ENCODE measurements at regions of chr10 and their contacts with region 1.

Region 1: DNA sequence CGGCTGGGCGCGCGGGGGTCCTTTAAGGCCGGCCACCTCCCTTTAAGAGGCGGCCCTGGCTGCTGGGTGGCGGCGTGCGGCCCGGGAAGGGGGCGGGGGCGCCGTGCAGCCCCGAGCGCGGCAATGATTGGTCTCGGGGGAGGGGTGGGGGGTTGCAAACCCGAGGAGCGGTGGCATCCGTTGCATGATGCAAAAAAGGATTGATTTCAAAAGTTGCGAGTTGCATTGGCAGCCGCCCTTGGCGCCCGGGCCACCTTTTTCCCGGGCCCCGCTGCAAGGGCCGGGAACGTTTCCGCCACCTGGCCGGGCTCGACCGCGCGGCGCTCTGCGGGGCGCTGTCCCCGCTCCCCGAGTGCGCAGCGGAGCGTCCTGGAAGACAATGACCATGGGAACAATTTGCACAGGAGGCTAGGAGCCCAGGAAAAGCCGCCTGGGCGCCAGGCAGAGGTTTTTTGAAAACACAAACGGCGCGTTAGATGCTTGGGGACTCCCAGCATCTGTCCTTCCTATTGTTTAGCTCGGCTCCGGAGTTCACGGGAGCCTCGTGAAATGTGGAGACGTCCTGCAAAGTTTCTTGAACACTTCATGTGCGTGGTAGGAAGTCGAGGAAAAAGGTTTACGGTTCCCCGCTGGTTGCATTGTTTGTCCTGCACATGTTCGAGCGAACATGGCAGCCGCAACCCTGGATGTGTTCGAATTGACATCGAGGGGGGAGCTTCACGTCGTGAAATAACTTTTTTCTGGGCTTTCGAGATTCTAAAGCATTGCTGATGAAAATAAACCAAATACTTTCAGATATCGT is at the start of gene SEPHS1:
- DNase-seq: peak in 1 of 2 donors; percentile 85
- H3K4me3 ChIP-seq: peak within 1 kb of the TSS; percentile 90 to 93
- H3K27ac ChIP-seq: peak within 1 kb of the TSS; percentile 93 to 96
- H3K4me1 ChIP-seq: peaks cover 0 to 13% of the 10 kb centered on the region in 2 donors
- H3K27me3 ChIP-seq: no peaks in the 10 kb centered on the region
- CTCF ChIP-seq: peak in 2 of 3 experiments; percentile 5 to 10
- total RNA-seq, gene SEPHS1: 20.3 TPM

Region 2: GRCh38 chr10:13160934-13161856 is 187.2 kb before region 1 on chr10 and contains the start of gene MCM10:
- intact Hi-C with region 1: loop called (anchors 1 kb)
- DNase-seq: peak; percentile 92 to 99
- H3K4me3 ChIP-seq: peak within 1 kb of the TSS; percentile 29 to 68
- H3K27ac ChIP-seq: no peak within 1 kb of the TSS
- H3K4me1 ChIP-seq: peaks cover 4 to 10% of the 10 kb centered on the region in 2 donors
- H3K27me3 ChIP-seq: no peaks in the 10 kb centered on the region
- CTCF ChIP-seq: peak; percentile 73 to 90 (median 85)
- total RNA-seq, gene MCM10: 0.11 TPM

Region 3: GRCh38 chr10:13371897-13372470 is 23.6 kb after region 1 on chr10:
- intact Hi-C with region 1: no loop called
- DNase-seq: peak in 1 of 2 donors; percentile 76
- H3K4me3 ChIP-seq: no peak overlapping the region
- H3K27ac ChIP-seq: no peak overlapping the region
- H3K4me1 ChIP-seq: no peaks in the 10 kb centered on the region
- H3K27me3 ChIP-seq: no peaks in the 10 kb centered on the region
- CTCF ChIP-seq: peak; percentile 48 to 83 (median 72)

Region 4: DNA sequence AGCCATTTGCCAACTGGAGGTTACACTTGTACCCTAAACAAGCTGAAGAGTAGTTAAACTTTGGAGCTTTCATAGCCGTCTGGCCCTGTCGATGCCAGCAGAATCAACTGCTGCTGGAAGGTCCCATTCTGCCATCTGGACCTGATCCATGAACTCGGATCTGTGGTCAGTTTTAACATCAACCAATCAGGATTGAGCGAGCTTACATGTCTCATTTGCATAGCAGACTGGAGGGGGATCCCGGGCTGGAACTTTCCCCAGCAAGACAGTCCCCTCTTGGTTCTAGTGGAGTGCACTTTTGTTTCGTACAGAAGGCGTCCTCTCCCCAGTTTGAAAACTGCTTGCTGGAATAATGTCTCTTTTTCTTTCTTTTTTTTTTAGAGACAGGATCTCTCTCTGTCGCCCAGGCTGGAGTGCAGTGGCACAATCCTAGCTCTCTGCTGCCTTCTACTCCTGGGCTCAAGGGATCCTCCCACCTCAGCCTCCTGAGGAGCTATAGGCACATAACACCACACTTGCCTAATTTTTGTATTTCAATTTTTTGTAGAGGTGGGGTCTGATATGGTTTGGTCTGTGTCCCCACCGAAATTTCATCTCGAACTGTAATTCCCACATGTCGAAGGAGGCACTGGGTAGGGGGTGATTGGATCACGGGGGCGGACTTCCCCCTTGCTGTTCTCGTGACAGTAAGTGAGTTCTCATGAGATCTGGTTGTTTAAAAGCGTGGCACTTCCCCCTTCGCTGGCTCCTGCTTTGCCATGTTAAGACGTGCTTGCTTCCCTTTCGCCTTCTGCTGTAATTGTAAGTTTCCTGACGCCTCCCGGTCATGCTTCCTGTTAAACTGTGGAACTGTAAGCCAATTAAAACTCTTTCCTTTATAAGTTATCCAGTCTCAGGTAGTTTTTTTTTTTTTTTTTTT is 42.4 kb after region 1 on chr10:
- intact Hi-C with region 1: no loop called
- DNase-seq: no peak
- H3K4me3 ChIP-seq: no peak overlapping the region
- H3K27ac ChIP-seq: no peak overlapping the region
- H3K4me1 ChIP-seq: no peaks in the 10 kb centered on the region
- H3K27me3 ChIP-seq: no peaks in the 10 kb centered on the region
- CTCF ChIP-seq: no peak

Region 5: DNA sequence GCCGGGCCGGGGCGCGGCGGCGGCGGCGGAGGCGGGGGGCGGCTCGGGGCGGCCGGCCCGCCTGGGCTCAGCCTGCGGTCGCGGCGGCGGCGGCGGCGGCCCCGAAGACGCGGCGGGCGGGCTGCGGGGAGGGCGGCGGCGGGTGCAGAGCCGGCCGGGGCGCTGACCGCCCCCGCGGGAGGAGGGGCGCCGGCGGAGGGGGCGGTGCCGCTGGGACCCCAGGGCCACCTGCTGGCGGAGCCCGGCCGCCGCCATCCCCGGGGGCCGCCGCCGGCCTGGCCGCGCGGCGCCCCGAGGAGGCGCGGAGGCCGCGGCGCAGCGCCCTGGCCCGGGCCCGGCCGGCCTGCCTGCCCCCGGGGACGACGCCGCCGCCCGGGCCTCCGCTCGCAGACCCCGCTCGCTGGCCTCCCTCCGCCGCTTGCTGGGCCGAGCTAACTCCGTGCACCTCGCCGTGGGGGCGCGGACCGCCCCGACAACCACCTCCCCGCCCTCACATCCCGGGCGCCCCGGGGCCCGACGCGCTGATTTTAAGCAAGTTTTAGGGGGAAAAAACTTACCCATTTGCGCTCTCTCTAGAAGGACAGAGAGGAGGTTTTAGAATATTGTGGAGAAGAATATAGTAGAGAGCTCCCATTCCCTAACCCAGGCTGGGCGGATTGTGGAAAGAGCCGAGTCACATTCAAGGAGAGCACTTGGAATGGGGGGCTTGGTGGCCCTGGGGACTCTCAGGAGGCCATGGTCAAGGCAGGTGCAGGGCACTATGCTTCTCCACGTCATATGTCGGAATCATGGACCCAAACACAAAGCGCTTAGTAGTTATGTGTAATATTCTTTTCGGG is 180.7 kb after region 1 on chr10 and contains the start of gene BEND7:
- intact Hi-C with region 1: loop called (anchors 5 kb)
- DNase-seq: no peak
- H3K4me3 ChIP-seq: peak within 1 kb of the TSS; percentile 66 to 80
- H3K27ac ChIP-seq: peak within 1 kb of the TSS; percentile 65 to 82
- H3K4me1 ChIP-seq: peaks cover 0 to 5% of the 10 kb centered on the region in 2 donors
- H3K27me3 ChIP-seq: no peaks in the 10 kb centered on the region
- CTCF ChIP-seq: no peak
- total RNA-seq, gene BEND7: 6.9 TPM

Region 6: GRCh38 chr10:13586676-13587355 is 238.4 kb after region 1 on chr10 and contains the start of gene PRPF18:
- intact Hi-C with region 1: loop called (anchors 1 kb)
- DNase-seq: peak; percentile 60 to 96
- H3K4me3 ChIP-seq: peak within 1 kb of the TSS; percentile 81 to 86
- H3K27ac ChIP-seq: peak within 1 kb of the TSS; percentile 50 to 53
- H3K4me1 ChIP-seq: peaks cover 5 to 10% of the 10 kb centered on the region in 2 donors
- H3K27me3 ChIP-seq: no peaks in the 10 kb centered on the region
- CTCF ChIP-seq: peak; percentile 88 to 99 (median 98)
- total RNA-seq, gene PRPF18: 3.4 TPM

Measured in ascending aorta (tissue), 2 donors.